ENCODE measurements at regions of chr7 and their contacts with region 1.

Region 1: GRCh38 chr7:33895025-33895804 is 10.1 kb upstream of the BMPER start:
- DNase-seq: peak; percentile 87
- H3K4me3 Mint-ChIP-seq: no peak overlapping the region
- H3K27ac Mint-ChIP-seq: no peak overlapping the region
- H3K4me1 Mint-ChIP-seq: peaks cover 2% of the 10 kb centered on the region
- H3K27me3 Mint-ChIP-seq: peaks cover 33% of the 10 kb centered on the region

Region 2: GRCh38 chr7:33185786-33186185 is 709.4 kb before region 1 on chr7:
- CTCF ChIA-PET with region 1: no interaction called
- intact Hi-C with region 1: loop called (anchors 2 kb)
- DNase-seq: peak; percentile 15
- H3K4me3 Mint-ChIP-seq: no peak overlapping the region
- H3K27ac Mint-ChIP-seq: no peak overlapping the region
- H3K4me1 Mint-ChIP-seq: peaks cover 8% of the 10 kb centered on the region
- H3K27me3 Mint-ChIP-seq: no peaks in the 10 kb centered on the region

Region 3: DNA sequence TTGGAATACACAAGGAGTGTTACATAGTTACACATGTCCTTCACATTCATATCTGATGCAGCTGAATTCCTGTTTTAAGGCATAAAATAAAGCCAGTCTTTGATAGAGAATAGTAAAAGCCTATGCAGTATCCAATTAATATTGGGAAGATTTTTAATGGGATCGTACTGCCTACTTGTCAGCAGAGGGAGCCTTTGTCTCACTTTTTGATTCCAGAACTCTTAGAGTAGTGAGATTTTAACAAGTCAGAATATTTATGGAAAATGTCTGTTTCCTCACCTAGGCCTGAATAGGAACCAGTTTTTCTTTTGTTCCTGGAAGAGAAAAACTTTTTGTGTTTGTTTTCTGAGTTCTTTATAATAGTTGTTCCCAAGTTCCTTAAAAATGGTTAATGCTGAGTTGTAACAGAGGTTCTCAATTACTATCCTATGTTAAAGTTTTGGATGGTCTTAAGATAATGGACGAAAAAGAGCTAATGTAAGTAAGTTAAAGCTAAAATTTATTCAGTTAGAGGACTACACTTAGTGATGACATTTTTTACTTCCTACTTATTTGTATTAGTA is 651.8 kb before region 1 on chr7:
- CTCF ChIA-PET with region 1: no interaction called
- intact Hi-C with region 1: loop called (anchors 1 kb)
- DNase-seq: no peak
- H3K4me3 Mint-ChIP-seq: no peak overlapping the region
- H3K27ac Mint-ChIP-seq: no peak overlapping the region
- H3K4me1 Mint-ChIP-seq: no peaks in the 10 kb centered on the region
- H3K27me3 Mint-ChIP-seq: no peaks in the 10 kb centered on the region

Region 4: GRCh38 chr7:33485747-33486493 is 409.3 kb before region 1 on chr7:
- CTCF ChIA-PET with region 1: no interaction called
- intact Hi-C with region 1: no loop called
- DNase-seq: no peak
- H3K4me3 Mint-ChIP-seq: no peak overlapping the region
- H3K27ac Mint-ChIP-seq: no peak overlapping the region
- H3K4me1 Mint-ChIP-seq: no peaks in the 10 kb centered on the region
- H3K27me3 Mint-ChIP-seq: no peaks in the 10 kb centered on the region

Region 5: GRCh38 chr7:33757562-33758165 is 137.6 kb before region 1 on chr7:
- CTCF ChIA-PET with region 1: interaction called, 5 read pairs
- intact Hi-C with region 1: loop called (anchors 1 kb)
- DNase-seq: peak; percentile 50
- H3K4me3 Mint-ChIP-seq: no peak overlapping the region
- H3K27ac Mint-ChIP-seq: no peak overlapping the region
- H3K4me1 Mint-ChIP-seq: no peaks in the 10 kb centered on the region
- H3K27me3 Mint-ChIP-seq: no peaks in the 10 kb centered on the region

Measured in activated naive CD4-positive, alpha-beta T cell treated with anti-CD3 and anti-CD28 coated beads for 36 hours (primary cell).